Caco-2 (cell line): ENCODE measurements at regions of chr3 and their contacts with region 1.

Region 1: DNA sequence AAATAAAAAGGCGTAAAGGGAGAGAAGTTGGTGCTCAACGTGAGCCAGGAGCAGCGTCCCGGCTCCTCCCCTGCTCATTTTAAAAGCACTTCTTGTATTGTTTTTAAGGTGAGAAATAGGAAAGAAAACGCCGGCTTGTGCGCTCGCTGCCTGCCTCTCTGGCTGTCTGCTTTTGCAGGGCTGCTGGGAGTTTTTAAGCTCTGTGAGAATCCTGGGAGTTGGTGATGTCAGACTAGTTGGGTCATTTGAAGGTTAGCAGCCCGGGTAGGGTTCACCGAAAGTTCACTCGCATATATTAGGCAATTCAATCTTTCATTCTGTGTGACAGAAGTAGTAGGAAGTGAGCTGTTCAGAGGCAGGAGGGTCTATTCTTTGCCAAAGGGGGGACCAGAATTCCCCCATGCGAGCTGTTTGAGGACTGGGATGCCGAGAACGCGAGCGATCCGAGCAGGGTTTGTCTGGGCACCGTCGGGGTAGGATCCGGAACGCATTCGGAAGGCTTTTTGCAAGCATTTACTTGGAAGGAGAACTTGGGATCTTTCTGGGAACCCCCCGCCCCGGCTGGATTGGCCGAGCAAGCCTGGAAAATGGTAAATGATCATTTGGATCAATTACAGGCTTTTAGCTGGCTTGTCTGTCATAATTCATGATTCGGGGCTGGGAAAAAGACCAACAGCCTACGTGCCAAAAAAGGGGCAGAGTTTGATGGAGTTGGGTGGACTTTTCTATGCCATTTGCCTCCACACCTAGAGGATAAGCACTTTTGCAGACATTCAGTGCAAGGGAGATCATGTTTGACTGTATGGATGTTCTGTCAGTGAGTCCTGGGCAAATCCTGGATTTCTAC is at the start of gene RARB:
- DNase-seq: peak; percentile 70 to 77
- H3K4me3 ChIP-seq: peak within 1 kb of the TSS; percentile 59
- H3K4me3 Mint-ChIP-seq: peak within 1 kb of the TSS; percentile 83
- H3K27ac Mint-ChIP-seq: no peak within 1 kb of the TSS
- H3K4me1 ChIP-seq: peaks cover 71% of the 10 kb centered on the region
- H3K4me1 Mint-ChIP-seq: peaks cover 18% of the 10 kb centered on the region
- H3K27me3 ChIP-seq: no peaks in the 10 kb centered on the region; the same call in 1 of the 2 replicates
- H3K27me3 Mint-ChIP-seq: no peaks in the 10 kb centered on the region
- CTCF ChIP-seq: no peak
- total RNA-seq, gene RARB: 2.5 and 3.8 TPM in 2 replicates

Region 2: DNA sequence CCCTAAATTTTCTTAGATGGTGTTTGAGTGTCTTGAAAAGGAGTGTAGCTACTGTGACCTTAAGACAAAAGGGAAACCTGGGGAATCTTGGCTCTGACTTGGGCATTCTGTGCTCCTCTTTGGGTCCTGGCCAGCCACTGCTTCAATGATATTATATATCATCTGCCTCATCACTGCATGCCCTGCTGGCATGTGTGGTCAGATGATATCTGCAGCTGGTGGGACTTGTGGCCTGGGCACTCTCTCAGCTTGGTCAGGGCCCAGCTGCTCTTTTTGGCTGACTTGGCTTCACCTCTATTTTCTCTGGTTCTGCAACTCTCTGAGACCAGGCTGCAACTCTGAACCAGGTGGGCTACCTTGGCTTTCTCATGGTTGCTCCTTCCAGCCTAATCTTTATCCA is 446.2 kb before region 1 on chr3:
- CTCF ChIA-PET with region 1: no interaction called
- POLR2A ChIA-PET with region 1: no interaction called
- intact Hi-C with region 1: no loop called
- DNase-seq: no peak
- H3K4me3 ChIP-seq: no peak overlapping the region
- H3K4me3 Mint-ChIP-seq: no peak overlapping the region
- H3K27ac Mint-ChIP-seq: no peak overlapping the region
- H3K4me1 ChIP-seq: no peaks in the 10 kb centered on the region
- H3K4me1 Mint-ChIP-seq: no peaks in the 10 kb centered on the region
- H3K27me3 ChIP-seq: no peaks in the 10 kb centered on the region
- H3K27me3 Mint-ChIP-seq: peaks cover 17% of the 10 kb centered on the region
- CTCF ChIP-seq: no peak

Region 3: DNA sequence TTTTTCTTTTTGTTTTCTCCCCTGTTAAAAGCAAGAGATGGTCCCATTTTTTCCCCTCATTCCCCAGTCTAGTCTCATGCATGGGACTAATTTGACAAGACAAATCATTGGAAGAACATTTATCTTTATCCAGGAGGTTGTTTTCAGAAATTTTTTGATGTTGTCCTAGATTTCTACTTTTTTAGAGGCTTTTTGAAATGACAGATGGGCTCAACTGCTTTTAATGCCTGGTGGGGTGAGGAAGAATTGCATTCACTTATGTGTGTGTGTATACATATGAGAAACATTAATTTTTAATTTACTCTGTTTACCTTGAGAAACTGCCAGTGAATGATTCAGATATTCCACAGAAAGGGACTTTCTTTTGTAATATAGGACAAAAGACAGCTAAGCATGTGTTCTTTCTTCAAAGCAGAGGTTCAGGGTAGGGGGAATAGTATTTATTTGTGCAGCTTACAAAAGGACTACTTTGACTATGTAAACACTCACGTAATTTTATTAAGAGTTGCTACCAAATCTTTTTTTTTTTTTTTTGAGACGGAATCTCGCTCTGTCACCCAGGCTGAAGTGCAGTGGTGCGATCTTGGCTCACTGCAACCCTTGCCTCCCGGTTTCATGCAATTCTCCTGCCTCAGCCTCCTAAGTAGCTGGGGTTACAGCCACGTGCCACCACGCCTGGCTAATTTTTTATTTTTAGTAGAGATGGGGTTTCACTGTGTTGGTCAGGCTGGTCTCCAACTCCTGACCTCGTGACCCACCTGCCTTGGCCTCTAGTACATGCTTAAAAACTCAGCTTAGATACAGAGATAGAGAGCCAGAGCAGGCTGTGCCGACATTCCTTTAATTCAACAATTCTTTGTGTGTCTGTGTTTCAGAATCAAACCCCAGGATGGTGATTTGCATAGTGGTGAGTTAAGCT is 130.2 kb before region 1 on chr3:
- CTCF ChIA-PET with region 1: no interaction called
- POLR2A ChIA-PET with region 1: no interaction called
- intact Hi-C with region 1: loop called (anchors 5 kb)
- DNase-seq: no peak
- H3K4me3 ChIP-seq: no peak overlapping the region
- H3K4me3 Mint-ChIP-seq: no peak overlapping the region
- H3K27ac Mint-ChIP-seq: no peak overlapping the region
- H3K4me1 ChIP-seq: no peaks in the 10 kb centered on the region
- H3K4me1 Mint-ChIP-seq: peaks cover 6% of the 10 kb centered on the region
- H3K27me3 ChIP-seq: no peaks in the 10 kb centered on the region
- H3K27me3 Mint-ChIP-seq: no peaks in the 10 kb centered on the region
- CTCF ChIP-seq: no peak

Region 4: GRCh38 chr3:25396686-25397085 is 31.5 kb before region 1 on chr3:
- CTCF ChIA-PET with region 1: no interaction called
- POLR2A ChIA-PET with region 1: no interaction called
- intact Hi-C with region 1: loop called (anchors 1 kb)
- DNase-seq: no peak
- H3K4me3 ChIP-seq: no peak overlapping the region
- H3K4me3 Mint-ChIP-seq: peak overlapping the region; percentile 63
- H3K27ac Mint-ChIP-seq: peak overlapping the region; percentile 91
- H3K4me1 ChIP-seq: peaks cover 21% of the 10 kb centered on the region
- H3K4me1 Mint-ChIP-seq: peaks cover 14% of the 10 kb centered on the region
- H3K27me3 ChIP-seq: no peaks in the 10 kb centered on the region
- H3K27me3 Mint-ChIP-seq: no peaks in the 10 kb centered on the region
- CTCF ChIP-seq: no peak

Region 5: GRCh38 chr3:25412269-25412668 is 15.9 kb before region 1 on chr3:
- CTCF ChIA-PET with region 1: no interaction called
- POLR2A ChIA-PET with region 1: interaction called, 5 read pairs
- intact Hi-C with region 1: loop called (anchors 1 kb)
- DNase-seq: peak in 1 of 2 experiments; percentile 44
- H3K4me3 ChIP-seq: no peak overlapping the region
- H3K4me3 Mint-ChIP-seq: no peak overlapping the region
- H3K27ac Mint-ChIP-seq: peak overlapping the region; percentile 79
- H3K4me1 ChIP-seq: peaks cover 37% of the 10 kb centered on the region
- H3K4me1 Mint-ChIP-seq: peaks cover 33% of the 10 kb centered on the region
- H3K27me3 ChIP-seq: no peaks in the 10 kb centered on the region
- H3K27me3 Mint-ChIP-seq: no peaks in the 10 kb centered on the region
- CTCF ChIP-seq: no peak

Region 6: DNA sequence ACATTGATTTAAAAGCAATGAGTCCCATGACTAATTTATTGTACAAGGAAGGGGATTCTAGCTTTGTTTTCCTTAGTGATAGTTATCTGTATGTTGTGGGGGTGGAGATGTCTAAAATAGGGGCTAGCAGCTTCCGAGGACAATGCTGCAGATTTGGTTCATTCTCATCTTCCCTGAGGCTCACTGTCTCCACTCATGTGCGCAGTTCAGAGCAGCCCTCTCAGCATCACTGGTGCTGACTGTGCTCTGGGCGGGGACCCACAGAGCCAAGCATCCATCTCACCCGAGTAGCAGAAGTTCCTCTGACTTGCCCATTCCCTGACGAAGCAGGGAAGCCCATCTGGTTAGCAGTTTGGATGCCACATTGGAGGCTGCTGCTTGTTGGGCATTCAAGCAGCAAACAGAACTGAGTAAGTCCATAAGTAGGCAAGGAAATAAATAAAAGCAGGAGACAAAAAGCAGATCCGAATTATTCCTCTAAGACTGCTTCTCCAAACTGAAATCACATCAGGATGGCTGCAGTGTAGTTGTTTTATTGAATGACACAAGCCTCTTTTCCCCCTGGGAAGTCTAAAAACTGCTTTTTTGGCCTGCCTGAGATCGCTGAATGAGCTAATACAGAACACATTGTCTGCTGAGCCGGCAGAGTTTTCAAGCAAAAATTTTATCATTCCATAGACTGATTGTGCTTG is 27.4 kb after region 1 on chr3:
- CTCF ChIA-PET with region 1: interaction called, 4 read pairs
- POLR2A ChIA-PET with region 1: interaction called, 6 read pairs
- intact Hi-C with region 1: loop called (anchors 1 kb)
- DNase-seq: no peak
- H3K4me3 ChIP-seq: no peak overlapping the region
- H3K4me3 Mint-ChIP-seq: peak overlapping the region; percentile 69
- H3K27ac Mint-ChIP-seq: peak overlapping the region; percentile 94
- H3K4me1 ChIP-seq: peaks cover 28% of the 10 kb centered on the region
- H3K4me1 Mint-ChIP-seq: peaks cover 43% of the 10 kb centered on the region
- H3K27me3 ChIP-seq: no peaks in the 10 kb centered on the region
- H3K27me3 Mint-ChIP-seq: no peaks in the 10 kb centered on the region
- CTCF ChIP-seq: no peak

Region 7: GRCh38 chr3:25594007-25594502 is 165.9 kb after region 1 on chr3:
- CTCF ChIA-PET with region 1: no interaction called
- POLR2A ChIA-PET with region 1: no interaction called
- intact Hi-C with region 1: loop called (anchors 5 kb)
- DNase-seq: peak in 1 of 2 experiments; percentile 49
- H3K4me3 ChIP-seq: no peak overlapping the region
- H3K4me3 Mint-ChIP-seq: no peak overlapping the region
- H3K27ac Mint-ChIP-seq: no peak overlapping the region
- H3K4me1 ChIP-seq: peaks cover 8% of the 10 kb centered on the region; the same call in 1 of the 2 replicates
- H3K4me1 Mint-ChIP-seq: no peaks in the 10 kb centered on the region
- H3K27me3 ChIP-seq: no peaks in the 10 kb centered on the region
- H3K27me3 Mint-ChIP-seq: no peaks in the 10 kb centered on the region
- CTCF ChIP-seq: peak; percentile 65 to 83

Region 8: GRCh38 chr3:26049951-26050350 is 621.8 kb after region 1 on chr3:
- CTCF ChIA-PET with region 1: no interaction called
- POLR2A ChIA-PET with region 1: no interaction called
- intact Hi-C with region 1: no loop called
- DNase-seq: no peak
- H3K4me3 ChIP-seq: no peak overlapping the region
- H3K4me3 Mint-ChIP-seq: no peak overlapping the region
- H3K27ac Mint-ChIP-seq: no peak overlapping the region
- H3K4me1 ChIP-seq: no peaks in the 10 kb centered on the region
- H3K4me1 Mint-ChIP-seq: no peaks in the 10 kb centered on the region
- H3K27me3 ChIP-seq: no peaks in the 10 kb centered on the region
- H3K27me3 Mint-ChIP-seq: no peaks in the 10 kb centered on the region
- CTCF ChIP-seq: no peak